ENCODE measurements at regions of chr1 and their contacts with region 1.

Region 1: DNA sequence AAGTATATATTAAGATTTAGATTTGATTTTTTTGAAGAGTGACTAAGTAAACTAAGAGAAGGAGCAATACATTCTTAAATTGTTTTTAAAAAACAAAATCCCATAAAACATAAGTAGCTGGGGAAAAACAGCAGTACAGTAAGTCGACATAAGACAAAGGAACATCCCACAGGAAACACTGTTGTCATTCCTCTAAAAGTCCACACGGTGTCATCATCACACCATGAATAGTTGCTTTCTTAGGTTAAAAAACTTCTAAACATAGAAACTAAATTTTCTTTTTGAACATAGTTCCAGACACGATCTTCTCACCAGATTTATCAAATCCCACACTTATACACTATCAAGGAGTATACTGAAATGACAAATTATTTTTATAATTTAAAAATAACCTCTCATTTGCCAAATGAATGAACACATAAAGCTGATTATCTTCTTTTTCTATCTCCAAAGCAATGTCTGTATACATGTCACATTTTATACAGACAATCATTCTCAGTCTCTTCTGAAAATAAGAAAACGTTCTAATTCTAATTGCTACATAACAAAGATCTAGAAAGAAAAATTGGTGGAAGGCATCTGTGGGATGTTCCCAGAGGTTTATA is 15.8 kb downstream of the ODF2L start:
- DNase-seq: no peak
- H3K4me3 Mint-ChIP-seq: no peak overlapping the region
- H3K27ac Mint-ChIP-seq: no peak overlapping the region
- H3K4me1 Mint-ChIP-seq: peaks cover 22% of the 10 kb centered on the region
- H3K27me3 Mint-ChIP-seq: no peaks in the 10 kb centered on the region

Region 2: GRCh38 chr1:86324130-86324822 is 56.1 kb before region 1 on chr1:
- intact Hi-C with region 1: no loop called
- DNase-seq: no peak
- H3K4me3 Mint-ChIP-seq: no peak overlapping the region
- H3K27ac Mint-ChIP-seq: no peak overlapping the region
- H3K4me1 Mint-ChIP-seq: no peaks in the 10 kb centered on the region
- H3K27me3 Mint-ChIP-seq: no peaks in the 10 kb centered on the region

Region 3: GRCh38 chr1:86419277-86419903 is 39.0 kb after region 1 on chr1:
- intact Hi-C with region 1: loop called (anchors 2 kb)
- DNase-seq: peak; percentile 29
- H3K4me3 Mint-ChIP-seq: no peak overlapping the region
- H3K27ac Mint-ChIP-seq: no peak overlapping the region
- H3K4me1 Mint-ChIP-seq: peaks cover 5% of the 10 kb centered on the region
- H3K27me3 Mint-ChIP-seq: peaks cover 3% of the 10 kb centered on the region

Region 4: GRCh38 chr1:86499987-86500593 is 119.7 kb after region 1 on chr1:
- intact Hi-C with region 1: loop called (anchors 1 kb)
- DNase-seq: no peak
- H3K4me3 Mint-ChIP-seq: no peak overlapping the region
- H3K27ac Mint-ChIP-seq: no peak overlapping the region
- H3K4me1 Mint-ChIP-seq: peaks cover 16% of the 10 kb centered on the region
- H3K27me3 Mint-ChIP-seq: peaks cover 38% of the 10 kb centered on the region

Region 5: GRCh38 chr1:86741947-86742572 is 361.7 kb after region 1 on chr1:
- intact Hi-C with region 1: loop called (anchors 5 kb)
- DNase-seq: no peak
- H3K4me3 Mint-ChIP-seq: no peak overlapping the region
- H3K27ac Mint-ChIP-seq: no peak overlapping the region
- H3K4me1 Mint-ChIP-seq: no peaks in the 10 kb centered on the region
- H3K27me3 Mint-ChIP-seq: no peaks in the 10 kb centered on the region

Region 6: GRCh38 chr1:87084244-87084836 is 704.0 kb after region 1 on chr1:
- intact Hi-C with region 1: loop called (anchors 5 kb)
- DNase-seq: no peak
- H3K4me3 Mint-ChIP-seq: no peak overlapping the region
- H3K27ac Mint-ChIP-seq: no peak overlapping the region
- H3K4me1 Mint-ChIP-seq: peaks cover 5% of the 10 kb centered on the region
- H3K27me3 Mint-ChIP-seq: no peaks in the 10 kb centered on the region

Measured in activated T-helper 1 cell treated with anti-CD3 and anti-CD28 coated beads, Interleukin-12 subunit alpha, Interleukin-12 subunit beta, Interleukin-2, Interleukin-4 antibody, amounts not matched to agents 30 ng/mL and 10 ng/mL and 1 ng/mL, durations not matched to agents 14 hours and 24 hours and 36 hours (primary cell).